ENCODE measurements at regions of chr6 and their contacts with region 1.

Region 1: DNA sequence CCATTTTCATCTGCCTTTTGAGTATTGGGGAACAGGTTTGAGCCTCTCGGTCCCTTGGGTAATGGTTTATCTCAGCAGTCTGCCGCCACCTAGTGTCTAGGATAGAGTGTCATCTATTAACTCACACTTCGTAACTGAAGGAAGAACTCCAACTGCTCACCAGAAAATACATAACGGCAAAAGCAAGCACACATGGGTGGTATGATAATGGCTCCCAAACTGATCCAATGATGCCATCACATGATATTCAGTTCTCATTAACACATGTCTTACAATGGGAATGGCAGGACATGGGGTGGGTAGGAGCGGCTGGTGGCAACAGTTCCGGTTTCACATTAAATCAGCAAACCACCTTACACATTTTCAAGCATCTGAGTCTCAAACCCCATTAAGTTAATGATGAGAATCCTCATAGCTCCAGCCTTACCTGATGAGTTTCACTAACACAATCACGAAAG is 110.7 kb upstream of the PHACTR1 start:
- H3K4me3 Mint-ChIP-seq: no peak overlapping the region
- H3K27ac Mint-ChIP-seq: no peak overlapping the region
- H3K4me1 Mint-ChIP-seq: peaks cover 7% of the 10 kb centered on the region
- H3K27me3 Mint-ChIP-seq: peaks cover 4% of the 10 kb centered on the region

Region 2: DNA sequence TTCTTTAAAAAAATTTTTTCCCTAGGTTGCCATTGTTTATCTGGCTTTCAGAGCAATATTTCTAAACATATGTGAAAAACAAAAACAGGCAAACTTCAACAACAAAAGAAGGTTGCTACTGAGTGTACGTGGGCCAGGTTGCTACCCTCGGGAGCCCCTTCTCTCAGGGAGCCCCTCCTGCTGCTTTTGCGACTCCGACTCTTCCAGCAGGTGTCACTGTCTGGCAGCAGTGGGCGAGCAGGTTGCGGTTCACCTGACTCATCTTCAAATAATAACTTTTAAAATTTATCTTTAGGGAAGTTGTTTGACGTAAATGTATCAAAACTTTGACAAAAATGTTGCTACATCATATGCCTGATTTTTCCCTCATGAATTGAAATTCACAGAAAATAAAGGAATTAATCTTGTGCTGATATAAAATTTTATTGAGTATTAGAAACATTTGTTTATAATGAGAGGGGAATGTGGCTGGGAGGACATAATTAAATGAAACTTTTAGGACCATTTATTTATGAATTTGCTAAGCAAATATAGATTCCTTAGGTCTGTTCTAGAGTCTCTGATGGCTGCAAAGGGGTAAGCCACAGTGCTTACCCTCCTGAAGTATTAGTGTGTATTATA is 455.0 kb before region 1 on chr6:
- intact Hi-C with region 1: loop called (anchors 10 kb)
- H3K4me3 Mint-ChIP-seq: no peak overlapping the region
- H3K27ac Mint-ChIP-seq: no peak overlapping the region
- H3K4me1 Mint-ChIP-seq: no peaks in the 10 kb centered on the region
- H3K27me3 Mint-ChIP-seq: no peaks in the 10 kb centered on the region

Region 3: GRCh38 chr6:12555267-12555666 is 50.6 kb before region 1 on chr6:
- intact Hi-C with region 1: no loop called
- H3K4me3 Mint-ChIP-seq: no peak overlapping the region
- H3K27ac Mint-ChIP-seq: no peak overlapping the region
- H3K4me1 Mint-ChIP-seq: no peaks in the 10 kb centered on the region
- H3K27me3 Mint-ChIP-seq: no peaks in the 10 kb centered on the region

Region 4: GRCh38 chr6:12648171-12648570 is 42.3 kb after region 1 on chr6:
- intact Hi-C with region 1: no loop called
- H3K4me3 Mint-ChIP-seq: no peak overlapping the region
- H3K27ac Mint-ChIP-seq: no peak overlapping the region
- H3K4me1 Mint-ChIP-seq: no peaks in the 10 kb centered on the region
- H3K27me3 Mint-ChIP-seq: peaks cover 2% of the 10 kb centered on the region